ENCODE measurements at regions of chr13 and their contacts with region 1.

Region 1: GRCh38 chr13:100530671-100531213 is 57.8 kb downstream of the GGACT start:
- DNase-seq: no peak
- H3K4me3 ChIP-seq: no peak overlapping the region
- H3K27ac ChIP-seq: no peak overlapping the region
- H3K4me1 ChIP-seq: no peaks in the 10 kb centered on the region; a peak in 1 of 4 replicates
- H3K27me3 ChIP-seq: no peaks in the 10 kb centered on the region
- CTCF ChIP-seq: no peak
- EP300 ChIP-seq: no peak
- RAD21 ChIP-seq: no peak

Region 2: GRCh38 chr13:100392709-100393641 is 137.8 kb before region 1 on chr13:
- CTCF ChIA-PET with region 1: no interaction called
- POLR2A ChIA-PET with region 1: no interaction called
- DNase-seq: no peak
- H3K4me3 ChIP-seq: no peak overlapping the region; a peak in 2 of 4 replicates
- H3K27ac ChIP-seq: peak overlapping the region; percentile 85 to 98; a peak in 3 of 4 replicates
- H3K4me1 ChIP-seq: peaks cover 9 to 30% of the 10 kb centered on the region in 2 experiments; a peak in 3 of 4 replicates
- H3K27me3 ChIP-seq: no peaks in the 10 kb centered on the region
- CTCF ChIP-seq: no peak
- EP300 ChIP-seq: peak; percentile 57 to 95
- RAD21 ChIP-seq: no peak; the same call in 1 of the 2 replicates

Region 3: GRCh38 chr13:100514788-100515409 is 15.8 kb before region 1 on chr13:
- CTCF ChIA-PET with region 1: interaction called, 26 read pairs
- POLR2A ChIA-PET with region 1: no interaction called
- DNase-seq: peak; percentile 92
- H3K4me3 ChIP-seq: no peak overlapping the region; a peak in 1 of 4 replicates
- H3K27ac ChIP-seq: no peak overlapping the region
- H3K4me1 ChIP-seq: peaks cover 14 to 19% of the 10 kb centered on the region in 2 experiments; a peak in 3 of 4 replicates
- H3K27me3 ChIP-seq: no peaks in the 10 kb centered on the region
- CTCF ChIP-seq: peak; percentile 99
- EP300 ChIP-seq: no peak
- RAD21 ChIP-seq: peak; percentile 99

Region 4: GRCh38 chr13:100542826-100543156 is 12.0 kb after region 1 on chr13:
- CTCF ChIA-PET with region 1: interaction called, 11 read pairs
- POLR2A ChIA-PET with region 1: no interaction called
- DNase-seq: no peak
- H3K4me3 ChIP-seq: no peak overlapping the region; a peak in 1 of 4 replicates
- H3K27ac ChIP-seq: no peak overlapping the region
- H3K4me1 ChIP-seq: peaks cover 0 to 18% of the 10 kb centered on the region in 2 experiments; a peak in 2 of 4 replicates
- H3K27me3 ChIP-seq: no peaks in the 10 kb centered on the region
- CTCF ChIP-seq: peak; percentile 63
- EP300 ChIP-seq: no peak
- RAD21 ChIP-seq: 0 out of 2 replicates have a peak, but pooled peaks have one; percentile 9

Region 5: GRCh38 chr13:100987953-100988352 is 457.2 kb after region 1 on chr13:
- CTCF ChIA-PET with region 1: no interaction called
- POLR2A ChIA-PET with region 1: no interaction called
- DNase-seq: no peak
- H3K4me3 ChIP-seq: no peak overlapping the region
- H3K27ac ChIP-seq: no peak overlapping the region
- H3K4me1 ChIP-seq: peaks cover 0 to 4% of the 10 kb centered on the region in 2 experiments; a peak in 2 of 4 replicates
- H3K27me3 ChIP-seq: no peaks in the 10 kb centered on the region; the same call in 1 of the 2 replicates
- CTCF ChIP-seq: peak; percentile 28
- EP300 ChIP-seq: no peak
- RAD21 ChIP-seq: peak; percentile 31

Region 6: DNA sequence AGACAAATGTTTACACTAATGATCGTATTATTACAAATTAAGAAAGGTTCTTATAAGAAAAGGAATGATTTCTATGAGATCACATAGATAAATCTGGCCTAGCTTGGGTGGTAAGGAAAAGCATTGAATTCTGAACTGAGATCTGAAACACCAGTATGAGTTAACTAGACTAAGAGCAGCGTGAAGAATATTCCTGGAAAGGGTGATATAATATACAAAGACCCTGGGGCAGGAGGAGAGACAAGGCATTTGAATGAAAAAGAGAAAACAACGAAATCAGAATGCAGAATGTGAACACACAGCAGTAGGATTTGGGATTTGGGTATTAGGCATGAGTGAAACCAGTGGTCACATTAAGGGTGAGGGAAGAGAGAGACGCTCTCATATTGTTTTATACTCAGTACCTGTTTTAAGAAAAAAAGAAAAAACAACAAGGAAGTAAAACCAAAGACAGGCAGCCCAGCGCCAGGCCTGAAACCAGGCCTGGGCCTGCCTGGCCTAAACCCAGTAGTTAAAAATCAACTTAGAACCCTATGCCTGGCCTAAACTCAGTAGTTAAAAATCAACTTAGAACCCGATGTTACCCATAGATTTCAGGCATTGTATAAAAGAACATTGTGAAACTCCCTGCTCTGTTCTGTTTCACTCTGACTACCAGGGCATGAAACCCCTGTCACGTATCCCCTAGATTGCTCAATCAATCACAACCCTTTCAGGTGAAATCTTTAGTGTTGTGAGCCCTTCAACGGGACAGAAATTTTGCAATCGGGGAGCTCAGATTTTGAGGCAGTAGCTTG is 1208.8 kb after region 1 on chr13:
- CTCF ChIA-PET with region 1: no interaction called
- POLR2A ChIA-PET with region 1: no interaction called
- DNase-seq: no peak
- H3K4me3 ChIP-seq: no peak overlapping the region
- H3K27ac ChIP-seq: no peak overlapping the region
- H3K4me1 ChIP-seq: peaks cover 0 to 2% of the 10 kb centered on the region in 2 experiments; a peak in 1 of 4 replicates
- H3K27me3 ChIP-seq: no peaks in the 10 kb centered on the region
- CTCF ChIP-seq: no peak
- EP300 ChIP-seq: no peak
- RAD21 ChIP-seq: no peak

Measured in SK-N-SH (cell line).